Cardiac septum (tissue), 1 donor: ENCODE measurements at regions of chr15 and their contacts with region 1.

Region 1: GRCh38 chr15:71660501-71660900 is 149.9 kb upstream of the NR2E3 start:
- DNase-seq: no peak

Region 2: GRCh38 chr15:71697236-71697635 is 36.7 kb after region 1 on chr15:
- intact Hi-C with region 1: no loop called
- DNase-seq: no peak

Region 3: GRCh38 chr15:71707230-71708050 is 46.9 kb after region 1 on chr15:
- intact Hi-C with region 1: loop called (anchors 5 kb)
- DNase-seq: no peak

Region 4: GRCh38 chr15:71939981-71940588 is 279.6 kb after region 1 on chr15:
- intact Hi-C with region 1: no loop called
- DNase-seq: no peak